HEK293 (cell line): ENCODE measurements at regions of chr9 and their contacts with region 1.

Region 1: GRCh38 chr9:34603610-34604231 is 8.2 kb downstream of the RPP25L start:
- H3K4me3 ChIP-seq: no peak overlapping the region
- H3K27ac ChIP-seq: no peak overlapping the region
- H3K4me1 ChIP-seq: no peaks in the 10 kb centered on the region
- CTCF ChIP-seq: peak; percentile 77

Region 2: GRCh38 chr9:34291023-34291422 is 312.7 kb before region 1 on chr9:
- CTCF ChIA-PET with region 1: no interaction called
- POLR2A ChIA-PET with region 1: no interaction called
- H3K4me3 ChIP-seq: no peak overlapping the region
- H3K27ac ChIP-seq: no peak overlapping the region
- H3K4me1 ChIP-seq: no peaks in the 10 kb centered on the region
- CTCF ChIP-seq: no peak

Region 3: DNA sequence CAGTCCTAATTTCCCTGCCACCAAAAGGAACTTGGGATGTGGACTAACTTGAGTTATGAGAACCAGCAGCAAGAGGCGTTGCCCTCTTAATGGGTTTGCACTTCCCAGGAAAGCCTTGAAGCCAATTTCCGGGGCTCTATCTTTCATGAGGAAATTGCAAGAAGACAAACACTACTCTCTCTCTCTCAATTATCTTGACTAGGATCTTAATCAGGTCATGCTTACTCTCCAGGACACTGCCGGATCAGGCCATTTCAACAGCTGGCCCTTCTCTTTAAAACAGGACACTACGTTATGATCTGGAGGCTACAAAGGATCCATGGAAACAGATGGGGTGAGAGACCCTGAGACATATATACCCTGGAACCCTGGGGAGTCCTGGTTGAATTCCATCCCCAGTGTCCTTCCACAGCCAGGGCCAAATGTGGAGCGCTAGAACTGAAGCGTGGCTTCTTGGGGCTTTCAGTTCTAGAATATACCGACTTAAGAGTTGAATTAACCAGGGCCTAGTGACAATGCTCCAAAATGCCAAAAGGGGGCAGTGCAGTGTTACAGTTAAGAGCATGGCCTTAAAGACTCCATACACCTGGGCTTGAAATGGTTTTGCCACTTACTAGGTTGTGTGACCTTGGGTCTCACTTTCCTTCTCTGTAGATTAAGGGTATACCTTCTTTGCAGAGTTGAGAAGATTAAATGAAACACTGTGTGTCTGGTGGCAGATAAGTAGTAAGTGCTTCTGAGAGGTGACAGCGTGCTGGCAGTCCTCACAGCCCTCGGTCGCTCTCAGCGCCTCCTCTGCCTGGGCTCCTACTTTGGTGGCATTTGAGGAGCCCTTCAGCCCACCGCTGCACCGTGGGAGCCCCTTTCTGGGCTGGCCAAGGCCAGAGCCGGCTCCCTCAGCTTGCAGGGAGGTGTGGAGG is 166.5 kb before region 1 on chr9:
- CTCF ChIA-PET with region 1: interaction called, 13 read pairs
- POLR2A ChIA-PET with region 1: no interaction called
- H3K4me3 ChIP-seq: no peak overlapping the region
- H3K27ac ChIP-seq: no peak overlapping the region
- H3K4me1 ChIP-seq: no peaks in the 10 kb centered on the region
- CTCF ChIP-seq: 0 out of 2 replicates have a peak, but pooled peaks have one; percentile 14

Region 4: GRCh38 chr9:34559624-34560452 is 43.9 kb before region 1 on chr9:
- CTCF ChIA-PET with region 1: interaction called, 17 read pairs
- POLR2A ChIA-PET with region 1: no interaction called
- H3K4me3 ChIP-seq: no peak overlapping the region
- H3K27ac ChIP-seq: no peak overlapping the region
- H3K4me1 ChIP-seq: peaks cover 1% of the 10 kb centered on the region; the same call in 1 of the 2 replicates
- CTCF ChIP-seq: no peak

Region 5: GRCh38 chr9:34620061-34620994 is 16.6 kb after region 1 on chr9 and contains the start of gene DCTN3:
- CTCF ChIA-PET with region 1: interaction called, 13 read pairs
- POLR2A ChIA-PET with region 1: interaction called, 4 read pairs
- H3K4me3 ChIP-seq: peak within 1 kb of the TSS; percentile 91
- H3K27ac ChIP-seq: peak within 1 kb of the TSS; percentile 27; the same call in 1 of the 2 replicates
- H3K4me1 ChIP-seq: no peaks in the 10 kb centered on the region
- CTCF ChIP-seq: no peak

Region 6: DNA sequence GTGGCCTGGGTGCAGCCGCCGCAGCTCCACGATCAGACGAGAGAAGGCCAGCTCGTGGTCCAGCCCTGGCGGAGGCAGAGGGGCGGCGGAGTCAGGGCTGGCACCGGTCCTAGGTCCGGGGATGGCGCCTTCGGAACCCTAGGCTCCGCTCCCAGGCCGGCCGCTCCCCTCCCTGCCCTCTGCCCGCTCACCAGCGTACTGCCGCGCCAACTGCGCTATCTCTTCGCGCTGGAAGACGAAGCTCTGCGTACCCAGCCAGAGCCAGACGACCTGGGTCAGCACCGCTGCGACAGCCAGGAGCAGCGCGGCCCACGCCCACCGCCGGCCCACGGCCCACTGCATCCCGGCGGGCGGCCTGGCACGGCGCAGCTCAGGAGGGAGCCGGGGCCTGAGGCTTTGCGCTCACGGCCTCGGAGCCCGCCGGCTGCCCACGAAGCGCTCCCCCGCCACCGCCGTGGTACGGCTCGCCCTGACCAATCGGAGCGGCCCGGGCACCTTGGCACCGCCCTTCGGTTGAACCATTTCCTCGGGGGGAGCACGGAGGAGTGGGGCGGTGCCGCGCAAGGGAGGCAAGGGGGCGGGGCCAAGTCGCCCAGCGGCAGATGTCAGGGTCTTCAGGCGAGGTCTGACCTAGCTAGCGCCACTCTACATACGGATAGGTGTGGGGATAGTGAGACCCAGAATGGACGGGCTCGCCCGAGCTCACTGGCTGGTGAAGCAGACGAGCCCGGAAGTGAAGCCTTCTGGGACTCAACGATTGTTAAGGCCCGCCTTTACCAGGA is 33.8 kb after region 1 on chr9 and contains the start of gene SIGMAR1:
- CTCF ChIA-PET with region 1: interaction called, 164 read pairs
- POLR2A ChIA-PET with region 1: no interaction called
- H3K4me3 ChIP-seq: peak within 1 kb of the TSS; percentile 67
- H3K27ac ChIP-seq: peak within 1 kb of the TSS; percentile 77
- H3K4me1 ChIP-seq: no peaks in the 10 kb centered on the region
- CTCF ChIP-seq: peak; percentile 20; the same call in 1 of the 2 replicates